PC-3 (cell line): ENCODE measurements at regions of chr2 and their contacts with region 1.

Region 1: DNA sequence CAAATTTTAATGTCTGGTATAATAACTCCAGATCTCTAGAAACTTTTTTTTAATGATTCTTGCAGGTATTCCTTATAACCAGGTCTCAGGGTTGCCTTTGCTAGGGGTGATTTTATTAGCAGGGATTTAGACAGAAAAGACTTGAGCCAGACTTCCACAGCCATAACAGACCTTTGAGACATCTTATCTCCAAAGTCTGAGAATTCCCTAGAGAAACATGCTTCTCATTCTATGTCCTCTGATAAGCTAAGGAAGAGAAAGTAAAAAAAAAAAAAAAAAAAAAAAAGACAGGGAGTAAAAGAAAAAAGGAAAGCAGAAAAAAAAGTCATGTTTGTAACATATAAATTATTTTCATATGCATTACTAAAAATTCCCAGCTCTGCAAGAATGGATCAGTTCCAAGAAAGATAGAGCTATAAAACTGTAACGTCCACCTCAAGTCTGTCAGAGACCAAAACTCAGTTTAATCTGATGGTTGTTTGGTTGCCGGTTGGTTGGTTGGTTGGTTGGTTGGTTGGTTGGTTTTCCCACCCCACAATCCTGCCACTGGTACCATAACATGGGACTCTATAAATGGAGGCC is 153.8 kb downstream of the COL6A3 start:
- DNase-seq: no peak
- ATAC-seq: no peak
- H3K4me3 ChIP-seq: no peak overlapping the region
- H3K27ac ChIP-seq: no peak overlapping the region
- H3K4me1 ChIP-seq: peaks cover 52% of the 10 kb centered on the region
- H3K27me3 ChIP-seq: no peaks in the 10 kb centered on the region
- CTCF ChIP-seq: no peak

Region 2: GRCh38 chr2:237223201-237223861 is 36.8 kb before region 1 on chr2:
- CTCF ChIA-PET with region 1: interaction called, 10 read pairs
- POLR2A ChIA-PET with region 1: no interaction called
- intact Hi-C with region 1: no loop called
- DNase-seq: peak; percentile 67
- ATAC-seq: no peak
- H3K4me3 ChIP-seq: no peak overlapping the region
- H3K27ac ChIP-seq: no peak overlapping the region; the same call in 1 of the 2 replicates
- H3K4me1 ChIP-seq: peaks cover 32% of the 10 kb centered on the region
- H3K27me3 ChIP-seq: no peaks in the 10 kb centered on the region
- CTCF ChIP-seq: no peak